ENCODE measurements at regions of chr9 and their contacts with region 1.

Region 1: DNA sequence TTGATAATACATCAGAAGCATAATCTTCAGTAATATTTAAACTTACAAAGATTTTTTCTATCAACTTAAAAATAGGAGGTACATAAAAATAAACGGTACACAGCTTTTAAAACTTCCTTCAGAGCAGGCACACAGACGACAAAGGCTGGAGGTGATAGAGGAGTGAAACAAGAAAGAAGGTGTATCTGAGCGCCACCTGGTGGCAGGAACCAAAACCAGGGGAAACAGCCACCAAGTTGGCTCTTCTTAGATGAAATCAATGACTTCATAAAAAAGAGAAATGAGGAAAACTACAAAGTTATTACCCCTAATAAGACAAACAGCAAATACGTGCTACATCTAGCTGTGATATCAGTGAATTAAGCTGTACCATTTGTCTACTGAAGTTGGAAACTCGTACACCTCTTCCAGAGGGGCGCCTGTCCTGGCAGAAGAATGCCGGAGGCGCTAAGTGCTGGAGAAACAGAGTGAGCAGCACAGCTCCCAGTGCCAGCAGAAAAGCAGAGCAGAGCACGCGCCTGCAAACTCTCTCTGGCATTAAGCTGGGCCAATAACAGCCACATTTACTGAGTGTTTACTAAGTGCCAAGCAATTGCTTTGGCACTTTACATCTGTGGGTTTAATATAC is 85.9 kb downstream of the SETX start:
- DNase-seq: peak; percentile 81

Region 2: GRCh38 chr9:132169672-132170392 is 99.0 kb before region 1 on chr9:
- in situ Hi-C with region 1: loop called (anchors 25 kb)
- DNase-seq: no peak

Region 3: GRCh38 chr9:132231019-132231701 is 37.7 kb before region 1 on chr9:
- in situ Hi-C with region 1: no loop called
- DNase-seq: no peak

Region 4: DNA sequence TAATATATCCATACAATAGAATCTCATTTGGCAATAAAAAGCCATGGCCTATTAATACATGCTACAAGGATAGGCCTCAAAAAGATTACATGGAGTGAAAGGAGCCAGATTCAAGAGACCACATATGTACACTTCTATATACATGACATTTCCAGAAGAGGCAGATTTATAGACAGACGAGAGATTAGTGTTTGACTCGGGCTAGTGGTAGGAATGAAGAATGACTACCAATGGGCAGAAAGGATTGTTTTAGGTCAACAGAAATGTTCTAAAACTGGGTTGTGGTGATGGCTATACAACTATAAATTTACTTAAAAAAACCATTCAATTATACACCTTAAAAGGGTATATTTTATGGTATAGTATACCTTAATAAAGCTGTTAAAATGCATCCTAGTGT is 44.0 kb after region 1 on chr9:
- in situ Hi-C with region 1: no loop called
- DNase-seq: no peak

Measured in G401 (cell line).